ENCODE measurements at regions of chr12 and their contacts with region 1.

Region 1: DNA sequence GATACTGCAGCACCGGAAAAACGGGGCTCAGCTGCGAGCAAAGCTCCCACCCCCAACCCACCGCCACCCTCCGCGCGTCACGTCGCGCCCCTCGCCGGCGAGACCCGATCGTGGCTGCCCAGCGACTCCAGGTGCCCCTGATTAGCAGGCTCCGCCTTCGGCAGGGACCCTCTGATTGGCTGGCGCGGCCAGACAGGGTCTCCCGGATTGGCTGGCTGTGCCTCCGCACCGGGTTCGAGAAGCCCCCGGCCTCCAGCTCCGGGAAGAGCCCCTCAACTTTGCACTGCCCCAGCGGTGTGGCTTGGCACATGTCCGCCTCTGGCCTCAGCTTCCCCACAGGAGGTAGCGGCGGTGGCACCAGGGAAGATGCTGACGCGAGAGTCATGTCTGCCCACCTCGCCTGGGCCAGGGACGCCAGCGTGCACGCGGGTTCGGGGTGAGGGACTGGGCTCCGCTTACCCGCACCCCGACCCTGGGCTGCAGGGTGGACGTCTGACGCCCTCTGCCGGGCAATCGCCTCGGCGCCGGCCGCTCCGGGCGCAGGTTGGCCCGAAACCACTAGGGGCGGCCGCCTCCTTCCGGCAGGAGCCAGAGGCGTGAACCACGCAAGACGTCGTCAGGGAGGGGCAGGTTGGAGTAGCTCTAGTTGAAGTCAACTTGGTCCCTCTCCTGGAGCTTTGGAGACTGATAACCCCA is 498 bp upstream of the RHOF start:
- DNase-seq: peak; percentile 92
- H3K4me3 Mint-ChIP-seq: peak overlapping the region; percentile 69
- H3K27ac Mint-ChIP-seq: peak overlapping the region; percentile 90
- H3K4me1 Mint-ChIP-seq: peaks cover 58% of the 10 kb centered on the region
- H3K27me3 Mint-ChIP-seq: no peaks in the 10 kb centered on the region
- CTCF ChIP-seq: peak; percentile 100

Region 2: GRCh38 chr12:121611306-121611705 is 182.7 kb before region 1 on chr12:
- CTCF ChIA-PET with region 1: no interaction called
- POLR2A ChIA-PET with region 1: no interaction called
- intact Hi-C with region 1: no loop called
- DNase-seq: no peak
- H3K4me3 Mint-ChIP-seq: no peak overlapping the region
- H3K27ac Mint-ChIP-seq: no peak overlapping the region
- H3K4me1 Mint-ChIP-seq: no peaks in the 10 kb centered on the region
- H3K27me3 Mint-ChIP-seq: no peaks in the 10 kb centered on the region
- CTCF ChIP-seq: no peak

Region 3: GRCh38 chr12:121688966-121689365 is 105.0 kb before region 1 on chr12:
- CTCF ChIA-PET with region 1: interaction called, 45 read pairs
- POLR2A ChIA-PET with region 1: interaction called, 7 read pairs
- intact Hi-C with region 1: no loop called
- DNase-seq: no peak
- H3K4me3 Mint-ChIP-seq: no peak overlapping the region
- H3K27ac Mint-ChIP-seq: no peak overlapping the region
- H3K4me1 Mint-ChIP-seq: peaks cover 5% of the 10 kb centered on the region
- H3K27me3 Mint-ChIP-seq: no peaks in the 10 kb centered on the region
- CTCF ChIP-seq: no peak

Region 4: DNA sequence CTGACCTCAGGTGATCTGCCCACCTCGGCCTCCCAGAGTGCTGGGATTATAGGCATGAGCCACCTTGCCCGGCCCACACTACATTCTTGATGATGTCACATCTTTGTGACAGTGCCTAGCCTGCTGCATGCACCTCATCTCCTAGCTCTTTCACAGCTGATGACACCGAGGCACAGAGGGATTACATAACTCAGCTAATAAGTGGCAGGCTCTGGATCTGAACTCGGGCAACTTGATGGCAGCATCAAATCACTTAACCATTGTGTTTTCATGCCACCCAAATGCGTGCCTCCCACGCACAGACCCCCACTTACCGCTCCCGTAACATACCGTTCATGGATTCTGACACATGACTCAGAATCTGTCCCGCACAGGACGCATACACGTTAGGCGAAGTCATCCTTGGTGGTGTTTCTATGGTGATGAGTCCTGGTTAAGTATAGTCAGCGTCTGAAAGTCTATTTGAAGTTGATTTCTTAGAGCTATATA is 74.0 kb before region 1 on chr12:
- CTCF ChIA-PET with region 1: interaction called, 58 read pairs
- POLR2A ChIA-PET with region 1: no interaction called
- intact Hi-C with region 1: no loop called
- DNase-seq: peak; percentile 45
- H3K4me3 Mint-ChIP-seq: no peak overlapping the region
- H3K27ac Mint-ChIP-seq: peak overlapping the region; percentile 66
- H3K4me1 Mint-ChIP-seq: peaks cover 21% of the 10 kb centered on the region
- H3K27me3 Mint-ChIP-seq: no peaks in the 10 kb centered on the region
- CTCF ChIP-seq: no peak

Region 5: DNA sequence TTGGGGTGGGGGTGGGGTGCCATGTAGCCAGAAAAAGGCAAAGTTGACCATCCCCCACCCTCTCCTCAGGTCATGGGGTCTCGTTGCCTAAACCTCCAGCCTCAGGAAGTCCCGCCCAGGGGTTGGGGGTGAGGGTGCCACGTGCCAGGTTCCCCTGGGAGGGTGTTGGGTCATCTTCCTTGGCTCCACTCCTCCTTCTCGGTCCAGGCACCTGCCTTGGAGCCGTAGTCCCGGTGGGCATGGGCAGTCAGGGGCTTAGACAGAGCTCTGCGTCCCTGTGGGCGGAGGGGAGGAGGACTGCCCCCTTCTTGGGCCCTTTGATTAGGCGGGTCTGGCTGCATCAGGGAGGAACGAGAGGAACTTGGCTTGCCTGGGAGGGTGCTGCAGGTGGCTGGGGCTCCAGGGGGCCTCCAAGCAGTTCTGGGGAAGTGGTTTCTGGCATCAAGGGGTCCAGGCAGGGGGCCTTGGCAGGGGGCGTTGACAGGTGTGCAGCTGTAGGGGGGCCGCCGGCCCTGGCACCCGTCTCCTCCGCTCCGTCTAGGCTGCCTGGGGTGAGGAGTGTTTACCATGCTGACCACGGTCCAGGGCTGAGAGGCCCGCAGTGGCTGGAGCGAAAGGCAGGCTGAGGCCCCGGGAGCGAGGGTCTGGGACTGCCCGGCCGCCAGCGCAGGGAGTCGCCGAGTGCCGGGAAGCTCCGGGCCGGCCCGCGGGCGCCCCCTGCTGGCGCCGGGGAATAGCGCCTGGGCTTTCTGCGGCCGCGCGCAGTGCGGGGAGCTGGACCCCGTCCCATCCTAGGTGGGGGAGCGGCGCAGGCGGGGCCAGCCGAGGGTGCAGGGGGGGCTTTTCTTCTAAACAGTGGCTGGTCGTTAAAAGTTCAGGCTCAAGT is 17.7 kb after region 1 on chr12:
- CTCF ChIA-PET with region 1: interaction called, 390 read pairs
- POLR2A ChIA-PET with region 1: interaction called, 344 read pairs
- intact Hi-C with region 1: loop called (anchors 1 kb)
- DNase-seq: peak; percentile 61
- H3K4me3 Mint-ChIP-seq: peak overlapping the region; percentile 82
- H3K27ac Mint-ChIP-seq: no peak overlapping the region
- H3K4me1 Mint-ChIP-seq: peaks cover 28% of the 10 kb centered on the region
- H3K27me3 Mint-ChIP-seq: no peaks in the 10 kb centered on the region
- CTCF ChIP-seq: peak; percentile 99

Region 6: GRCh38 chr12:121888478-121889266 is 94.7 kb after region 1 on chr12 and contains the start of gene PSMD9:
- CTCF ChIA-PET with region 1: interaction called, 55 read pairs
- POLR2A ChIA-PET with region 1: interaction called, 128 read pairs
- intact Hi-C with region 1: loop called (anchors 1 kb)
- DNase-seq: peak; percentile 97
- H3K4me3 Mint-ChIP-seq: peak within 1 kb of the TSS; percentile 98
- H3K27ac Mint-ChIP-seq: peak within 1 kb of the TSS; percentile 98
- H3K4me1 Mint-ChIP-seq: peaks cover 13% of the 10 kb centered on the region
- H3K27me3 Mint-ChIP-seq: no peaks in the 10 kb centered on the region
- CTCF ChIP-seq: peak; percentile 62
- total RNA-seq, gene PSMD9: 96.3 and 105 TPM in 2 replicates

Region 7: GRCh38 chr12:122190842-122191668 is 397.1 kb after region 1 on chr12:
- CTCF ChIA-PET with region 1: no interaction called
- POLR2A ChIA-PET with region 1: no interaction called
- intact Hi-C with region 1: loop called (anchors 10 kb)
- DNase-seq: peak; percentile 67
- H3K4me3 Mint-ChIP-seq: no peak overlapping the region
- H3K27ac Mint-ChIP-seq: no peak overlapping the region
- H3K4me1 Mint-ChIP-seq: no peaks in the 10 kb centered on the region
- H3K27me3 Mint-ChIP-seq: no peaks in the 10 kb centered on the region
- CTCF ChIP-seq: peak; percentile 83

Measured in MCF 10A (cell line).